ENCODE measurements at regions of chr1 and their contacts with region 1.

Region 1: DNA sequence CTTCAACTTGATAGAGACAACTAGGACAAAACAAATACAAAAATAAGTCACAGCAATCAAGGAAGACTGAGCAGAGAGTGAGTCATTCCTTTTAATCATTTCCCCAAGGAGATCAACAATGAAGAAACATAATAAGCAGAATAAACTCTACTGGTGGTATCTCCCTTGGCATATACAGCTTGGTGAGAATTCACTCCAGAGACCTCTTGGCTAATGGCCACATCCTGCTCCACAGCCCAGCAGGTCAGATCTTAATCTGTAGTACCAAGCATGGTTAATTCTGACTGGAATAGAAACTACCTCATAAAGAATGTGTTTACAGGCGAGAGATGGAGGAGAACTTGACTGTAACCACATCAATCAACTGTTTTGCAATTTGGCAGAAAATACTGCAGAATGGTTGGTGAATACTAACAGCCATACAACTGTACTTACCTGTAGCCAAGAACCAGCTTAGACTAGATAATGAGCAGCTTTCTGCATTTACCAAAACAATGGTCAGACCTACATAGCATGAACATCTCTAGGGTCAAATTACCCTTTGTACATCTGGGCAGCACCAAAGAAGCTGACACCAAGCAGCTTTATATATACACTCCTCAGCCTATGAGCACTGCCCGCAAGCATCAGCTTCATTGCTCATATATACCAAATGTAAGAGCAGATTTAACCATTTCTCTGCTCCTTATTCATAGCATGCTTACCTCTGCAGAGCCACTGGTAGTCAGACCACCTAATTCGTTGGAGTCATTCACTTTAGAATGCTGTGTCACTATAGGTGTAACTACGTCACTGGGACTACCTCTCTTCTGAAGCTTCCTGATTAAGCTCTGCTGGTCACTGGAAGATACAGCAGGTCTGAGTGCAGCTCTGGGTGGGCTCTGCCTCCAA is 51.0 kb downstream of the KIAA0319L start:
- DNase-seq: peak; percentile 78 to 89 (median 82)
- H3K4me3 ChIP-seq: peak overlapping the region in 1 of 2 donors; percentile 39
- H3K4me3 Mint-ChIP-seq: peak overlapping the region; percentile 65 to 88 (median 76)
- H3K27ac ChIP-seq: peak overlapping the region; percentile 59
- H3K27ac Mint-ChIP-seq: peak overlapping the region; percentile 86 to 98 (median 96)
- H3K4me1 ChIP-seq: peaks cover 65% of the 10 kb centered on the region
- H3K4me1 Mint-ChIP-seq: peaks cover 63 to 89% (median 73%) of the 10 kb centered on the region in 4 donors
- H3K27me3 ChIP-seq: no peaks in the 10 kb centered on the region
- H3K27me3 Mint-ChIP-seq: no peaks in the 10 kb centered on the region

Region 2: DNA sequence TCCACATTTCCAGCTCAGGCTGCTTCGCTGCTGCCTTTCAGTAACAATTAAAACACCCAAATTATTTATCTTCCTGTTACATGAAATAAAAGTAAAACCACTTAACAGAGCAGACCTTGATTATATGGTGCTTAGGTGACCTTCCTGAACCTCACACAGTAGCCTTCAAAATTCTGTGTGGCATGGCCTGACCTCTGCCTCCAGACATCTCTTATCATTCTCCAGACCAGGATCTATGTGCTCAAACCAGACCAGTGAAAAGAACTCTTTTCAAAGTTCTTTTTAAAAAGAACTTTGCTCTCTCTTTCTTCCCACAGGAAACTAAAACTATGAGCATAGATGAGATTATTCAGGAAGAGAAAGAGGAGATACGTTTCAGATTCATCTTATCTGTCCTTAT is 13.3 kb after region 1 on chr1:
- CTCF ChIA-PET with region 1: interaction called, 3 read pairs
- POLR2A ChIA-PET with region 1: interaction called, 12 read pairs
- intact Hi-C with region 1: no loop called
- DNase-seq: no peak
- H3K4me3 ChIP-seq: no peak overlapping the region
- H3K4me3 Mint-ChIP-seq: peak overlapping the region in 1 of 8 donors; percentile 26
- H3K27ac ChIP-seq: no peak overlapping the region
- H3K27ac Mint-ChIP-seq: peak overlapping the region; percentile 12 to 86 (median 74)
- H3K4me1 ChIP-seq: peaks cover 7% of the 10 kb centered on the region
- H3K4me1 Mint-ChIP-seq: peaks cover 24 to 52% (median 45%) of the 10 kb centered on the region in 4 donors
- H3K27me3 ChIP-seq: no peaks in the 10 kb centered on the region
- H3K27me3 Mint-ChIP-seq: no peaks in the 10 kb centered on the region

Region 3: GRCh38 chr1:35539073-35539823 is 33.1 kb after region 1 on chr1:
- CTCF ChIA-PET with region 1: interaction called, 16 read pairs
- POLR2A ChIA-PET with region 1: interaction called, 80 read pairs
- intact Hi-C with region 1: loop called (anchors 1 kb)
- DNase-seq: peak; percentile 69 to 77 (median 71)
- H3K4me3 ChIP-seq: peak overlapping the region in 1 of 2 donors; percentile 19
- H3K4me3 Mint-ChIP-seq: peak overlapping the region; percentile 75 to 91 (median 80)
- H3K27ac ChIP-seq: peak overlapping the region; percentile 52
- H3K27ac Mint-ChIP-seq: peak overlapping the region; percentile 77 to 96 (median 94)
- H3K4me1 ChIP-seq: peaks cover 69% of the 10 kb centered on the region
- H3K4me1 Mint-ChIP-seq: peaks cover 58 to 90% (median 80%) of the 10 kb centered on the region in 4 donors
- H3K27me3 ChIP-seq: no peaks in the 10 kb centered on the region
- H3K27me3 Mint-ChIP-seq: no peaks in the 10 kb centered on the region